Naive thymus-derived CD4-positive, alpha-beta T cell (primary cell): ENCODE measurements at regions of chr1 and their contacts with region 1.

Region 1: GRCh38 chr1:63522891-63523728 is at the starts of genes EFCAB7 and ITGB3BP:
- DNase-seq: peak; percentile 73 to 86 (median 82)
- ATAC-seq: peak; percentile 92
- H3K4me3 ChIP-seq: peak within 1 kb of the TSS; percentile 83
- H3K4me3 Mint-ChIP-seq: peak within 1 kb of the TSS; percentile 82 to 100 (median 98)
- H3K27ac ChIP-seq: peak within 1 kb of the TSS; percentile 78
- H3K27ac Mint-ChIP-seq: peak within 1 kb of the TSS; percentile 93 to 99 (median 97)
- H3K4me1 ChIP-seq: peaks cover 7 to 13% of the 10 kb centered on the region in 2 donors
- H3K4me1 Mint-ChIP-seq: peaks cover 12 to 47% (median 36%) of the 10 kb centered on the region in 7 donors
- H3K27me3 ChIP-seq: no peaks in the 10 kb centered on the region
- H3K27me3 Mint-ChIP-seq: peaks cover 0 to 2% (median 0%) of the 10 kb centered on the region in 5 donors
- total RNA-seq, gene EFCAB7: 4.1 to 13.5 (median 9.2) TPM
- total RNA-seq, gene ITGB3BP: 16.5 to 52.6 (median 32.9) TPM

Region 2: GRCh38 chr1:63135174-63135512 is 388.0 kb before region 1 on chr1:
- CTCF ChIA-PET with region 1: no interaction called
- POLR2A ChIA-PET with region 1: no interaction called
- intact Hi-C with region 1: no loop called
- DNase-seq: no peak
- ATAC-seq: no peak
- H3K4me3 ChIP-seq: no peak overlapping the region
- H3K4me3 Mint-ChIP-seq: no peak overlapping the region
- H3K27ac ChIP-seq: no peak overlapping the region
- H3K27ac Mint-ChIP-seq: no peak overlapping the region
- H3K4me1 ChIP-seq: no peaks in the 10 kb centered on the region
- H3K4me1 Mint-ChIP-seq: no peaks in the 10 kb centered on the region
- H3K27me3 ChIP-seq: no peaks in the 10 kb centered on the region
- H3K27me3 Mint-ChIP-seq: peaks cover 9 to 32% (median 16%) of the 10 kb centered on the region in 5 donors

Region 3: DNA sequence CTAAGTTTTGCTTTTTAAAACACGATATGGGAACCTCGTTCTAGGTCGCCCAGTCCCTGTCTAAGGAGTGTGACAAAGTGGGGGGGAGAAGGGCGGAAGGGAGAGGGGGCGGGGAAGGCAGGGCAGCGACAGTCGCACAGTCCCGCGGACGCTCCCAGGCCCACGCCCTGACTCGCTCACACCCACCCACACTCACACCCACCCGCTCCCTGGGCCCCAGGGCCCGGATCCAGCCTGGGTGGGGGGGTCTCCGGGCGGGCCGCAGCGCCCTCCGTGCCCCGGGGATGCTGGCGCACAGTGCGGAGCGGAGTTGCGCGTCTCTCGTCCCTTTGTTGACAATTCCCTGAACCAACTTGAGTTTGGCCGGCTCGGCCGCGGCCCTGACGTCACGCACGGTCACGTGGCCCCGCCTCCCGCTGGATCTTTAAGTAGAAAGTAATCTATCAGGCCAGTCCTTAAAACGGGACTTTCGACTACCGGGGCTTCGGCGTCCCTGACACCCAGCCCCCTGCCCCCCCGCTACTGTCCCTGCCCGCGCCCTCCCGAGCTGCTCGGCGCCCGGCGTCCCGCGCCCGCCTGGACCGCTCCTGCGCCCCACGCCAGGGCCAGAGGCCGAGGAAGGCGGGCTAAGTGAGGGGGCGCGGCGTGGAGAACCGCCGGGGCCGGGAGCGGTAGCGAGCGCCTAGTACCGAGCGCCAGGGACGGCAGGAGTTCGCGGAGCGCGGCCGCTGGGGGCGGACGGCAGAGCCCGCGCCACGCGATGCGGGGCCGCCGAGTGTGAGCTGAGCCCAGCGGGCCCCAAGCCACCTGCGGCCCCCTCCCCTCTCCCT is 200.8 kb before region 1 on chr1 and contains the start of gene FOXD3:
- CTCF ChIA-PET with region 1: no interaction called
- POLR2A ChIA-PET with region 1: no interaction called
- intact Hi-C with region 1: loop called (anchors 1 to 2 kb)
- DNase-seq: peak in 5 of 9 donors; percentile 5 to 48 (median 26)
- ATAC-seq: peak; percentile 43
- H3K4me3 ChIP-seq: peak within 1 kb of the TSS; percentile 40
- H3K4me3 Mint-ChIP-seq: peak within 1 kb of the TSS; percentile 76 to 89 (median 84)
- H3K27ac ChIP-seq: no peak within 1 kb of the TSS
- H3K27ac Mint-ChIP-seq: peak within 1 kb of the TSS in 8 of 9 donors; percentile 67 to 88 (median 78)
- H3K4me1 ChIP-seq: peaks cover 2 to 13% of the 10 kb centered on the region in 2 donors
- H3K4me1 Mint-ChIP-seq: peaks cover 7 to 74% (median 50%) of the 10 kb centered on the region in 7 donors
- H3K27me3 ChIP-seq: peaks cover 42 to 77% of the 10 kb centered on the region in 2 donors
- H3K27me3 Mint-ChIP-seq: peaks cover 63 to 84% (median 78%) of the 10 kb centered on the region in 5 donors
- total RNA-seq, gene FOXD3: not detected

Region 4: GRCh38 chr1:63327417-63328139 is 195.5 kb before region 1 on chr1:
- CTCF ChIA-PET with region 1: no interaction called
- POLR2A ChIA-PET with region 1: no interaction called
- intact Hi-C with region 1: loop called (anchors 1 to 2 kb)
- DNase-seq: peak in 5 of 9 donors; percentile 17 to 68 (median 25)
- ATAC-seq: peak; percentile 52
- H3K4me3 ChIP-seq: no peak overlapping the region
- H3K4me3 Mint-ChIP-seq: peak overlapping the region in 7 of 10 donors; percentile 11 to 53 (median 32)
- H3K27ac ChIP-seq: no peak overlapping the region
- H3K27ac Mint-ChIP-seq: peak overlapping the region in 7 of 9 donors; percentile 33 to 77 (median 50)
- H3K4me1 ChIP-seq: peaks cover 11 to 15% of the 10 kb centered on the region in 2 donors
- H3K4me1 Mint-ChIP-seq: peaks cover 9 to 48% (median 36%) of the 10 kb centered on the region in 7 donors
- H3K27me3 ChIP-seq: peaks cover 39 to 65% of the 10 kb centered on the region in 2 donors
- H3K27me3 Mint-ChIP-seq: peaks cover 68 to 79% (median 79%) of the 10 kb centered on the region in 5 donors

Region 5: GRCh38 chr1:63367215-63368103 is 155.7 kb before region 1 on chr1 and contains the start of gene ALG6:
- CTCF ChIA-PET with region 1: no interaction called
- POLR2A ChIA-PET with region 1: no interaction called
- intact Hi-C with region 1: loop called (anchors 1 kb)
- DNase-seq: peak; percentile 66 to 98 (median 84)
- ATAC-seq: peak; percentile 99
- H3K4me3 ChIP-seq: peak within 1 kb of the TSS; percentile 95
- H3K4me3 Mint-ChIP-seq: peak within 1 kb of the TSS; percentile 91 to 99 (median 94)
- H3K27ac ChIP-seq: peak within 1 kb of the TSS; percentile 72
- H3K27ac Mint-ChIP-seq: peak within 1 kb of the TSS; percentile 79 to 93 (median 84)
- H3K4me1 ChIP-seq: peaks cover 0 to 7% of the 10 kb centered on the region in 2 donors
- H3K4me1 Mint-ChIP-seq: peaks cover 23 to 46% (median 36%) of the 10 kb centered on the region in 7 donors
- H3K27me3 ChIP-seq: no peaks in the 10 kb centered on the region
- H3K27me3 Mint-ChIP-seq: peaks cover 0 to 7% (median 0%) of the 10 kb centered on the region in 5 donors
- total RNA-seq, gene ALG6: 16.1 to 29.8 (median 27.3) TPM